Activated T-helper 2 cell treated with anti-CD3 and anti-CD28 coated beads, Interferon-gamma antibody, Interleukin-2, Interleukin-4, amounts not matched to agents 10 μg/mL and 5 μg/mL and 100 μg/mL, durations not matched to agents 14 hours and 24 hours and 36 hours (primary cell): ENCODE measurements at regions of chr5 and their contacts with region 1.

Region 1: DNA sequence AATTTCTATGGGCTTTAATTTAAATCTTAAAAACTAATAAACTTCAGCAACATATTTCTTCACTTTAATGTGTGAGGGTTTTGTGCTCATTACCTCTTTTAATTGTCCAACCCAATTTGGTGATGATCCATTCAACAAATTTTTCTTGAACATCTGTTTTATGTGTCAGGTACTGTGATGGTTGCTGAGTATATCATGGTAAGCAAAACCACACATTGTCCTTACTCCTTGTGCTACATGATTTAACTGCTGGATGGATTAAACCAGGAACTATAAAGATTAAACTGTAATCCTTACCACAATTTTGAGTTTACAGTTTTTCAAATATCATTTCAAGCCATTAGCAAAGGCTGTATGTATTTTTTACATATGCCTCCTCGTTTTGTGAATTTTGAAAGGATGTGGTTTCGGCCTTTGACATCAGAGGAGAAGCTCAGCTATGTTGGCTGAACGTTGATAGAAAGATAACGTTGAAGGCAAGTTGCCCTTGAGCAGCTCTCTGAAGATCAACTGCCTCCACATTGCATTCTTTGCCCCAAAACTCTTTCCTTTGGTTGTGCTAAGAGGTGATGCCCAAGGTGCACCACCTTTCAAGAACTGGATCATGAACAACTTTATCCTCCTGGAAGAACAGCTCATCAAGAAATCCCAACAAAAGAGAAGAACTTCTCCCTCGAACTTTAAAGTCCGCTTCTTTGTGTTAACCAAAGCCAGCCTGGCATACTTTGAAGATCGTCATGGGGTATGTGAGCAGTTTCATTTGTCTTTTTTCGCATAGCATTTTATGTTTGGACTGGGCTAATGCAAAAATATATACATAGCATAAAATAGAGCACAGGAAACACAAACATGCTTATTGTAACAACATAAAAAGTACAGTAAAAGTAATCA is at the start of gene ITK:
- DNase-seq: peak; percentile 53
- H3K4me3 Mint-ChIP-seq: peak within 1 kb of the TSS; percentile 99
- H3K27ac Mint-ChIP-seq: peak within 1 kb of the TSS; percentile 98
- H3K4me1 Mint-ChIP-seq: peaks cover 44% of the 10 kb centered on the region
- H3K27me3 Mint-ChIP-seq: no peaks in the 10 kb centered on the region
- total RNA-seq, gene ITK: 313 and 319 TPM in 2 replicates

Region 2: DNA sequence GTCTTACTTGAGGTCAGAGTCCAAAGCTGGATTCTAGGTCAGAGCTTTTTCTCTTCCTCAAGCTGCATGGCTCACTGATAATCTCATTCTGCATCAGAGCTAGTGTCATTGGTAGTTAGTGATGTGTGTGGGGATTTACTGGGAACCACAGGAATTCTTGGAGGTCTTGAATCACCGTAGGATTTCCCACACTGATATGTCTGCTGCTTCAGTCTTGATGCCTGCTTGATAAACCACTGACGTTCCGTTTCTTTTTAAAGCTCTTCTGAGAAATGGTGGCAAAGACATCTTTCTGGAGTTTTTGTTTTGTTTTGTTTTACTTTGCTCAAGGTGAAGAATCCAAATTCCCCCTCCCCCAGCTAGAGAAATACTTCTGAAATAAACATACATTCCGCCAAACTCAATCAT is 13.4 kb before region 1 on chr5:
- intact Hi-C with region 1: loop called (anchors 1 kb)
- DNase-seq: peak; percentile 9
- H3K4me3 Mint-ChIP-seq: peak overlapping the region; percentile 43
- H3K27ac Mint-ChIP-seq: peak overlapping the region; percentile 86
- H3K4me1 Mint-ChIP-seq: peaks cover 75% of the 10 kb centered on the region
- H3K27me3 Mint-ChIP-seq: no peaks in the 10 kb centered on the region

Region 3: DNA sequence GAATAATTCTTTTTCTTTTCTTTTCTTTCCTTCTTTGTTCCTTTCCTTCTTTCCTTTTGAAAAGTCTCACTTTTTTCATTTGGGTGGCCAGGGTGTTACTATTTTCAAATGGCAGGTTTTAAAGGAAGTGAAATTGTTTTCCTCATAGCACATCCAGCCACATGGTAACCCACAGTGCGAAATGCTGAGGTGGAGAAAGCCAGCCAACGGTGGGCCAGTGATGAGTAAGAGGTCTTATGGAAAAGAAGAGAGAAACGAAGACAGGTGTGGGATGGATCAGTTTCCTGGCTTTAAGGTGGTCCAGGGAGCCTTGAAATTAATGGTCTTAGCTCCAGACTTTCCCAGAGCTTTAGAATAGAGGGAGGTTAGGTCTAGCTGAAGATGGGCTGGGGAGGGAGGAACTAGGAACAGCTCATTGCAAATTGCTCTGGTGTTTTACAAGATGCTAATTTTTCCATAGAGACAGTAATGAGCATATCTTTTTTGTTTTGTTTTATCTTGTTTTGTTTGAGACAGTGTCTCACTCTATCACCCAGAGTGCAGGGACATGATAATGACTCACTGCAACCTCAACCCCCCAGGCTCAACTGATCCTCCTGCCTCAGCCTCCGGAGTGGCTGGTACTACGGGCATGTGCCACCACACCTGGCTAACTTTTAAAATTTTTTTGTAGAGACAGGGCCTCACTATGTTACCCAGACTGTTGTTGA is 17.8 kb after region 1 on chr5:
- intact Hi-C with region 1: loop called (anchors 2 kb)
- DNase-seq: no peak
- H3K4me3 Mint-ChIP-seq: peak overlapping the region; percentile 55
- H3K27ac Mint-ChIP-seq: peak overlapping the region; percentile 84
- H3K4me1 Mint-ChIP-seq: peaks cover 85% of the 10 kb centered on the region
- H3K27me3 Mint-ChIP-seq: no peaks in the 10 kb centered on the region

Region 4: DNA sequence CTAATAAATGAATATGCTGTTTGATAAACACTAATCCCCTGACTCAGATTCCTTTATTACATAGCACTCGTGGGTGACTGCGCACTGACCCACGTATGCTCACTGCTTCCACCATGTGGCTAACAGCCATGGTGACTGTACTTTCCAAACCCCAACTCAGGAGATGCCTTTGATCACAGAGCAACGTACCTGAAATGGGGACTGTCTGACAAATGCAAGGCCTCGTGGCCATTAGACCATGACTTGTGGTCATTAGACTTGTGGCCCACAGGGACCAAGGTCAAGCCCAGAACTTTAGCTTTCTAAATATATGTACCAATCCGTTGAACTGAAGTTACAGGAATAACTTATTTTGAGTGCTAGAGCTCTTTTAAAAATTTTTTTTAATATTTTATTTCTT is 131.9 kb after region 1 on chr5:
- intact Hi-C with region 1: no loop called
- DNase-seq: peak; percentile 47
- H3K4me3 Mint-ChIP-seq: no peak overlapping the region
- H3K27ac Mint-ChIP-seq: peak overlapping the region; percentile 70
- H3K4me1 Mint-ChIP-seq: peaks cover 20% of the 10 kb centered on the region
- H3K27me3 Mint-ChIP-seq: no peaks in the 10 kb centered on the region